H1 (cell line): ENCODE measurements at regions of chr1 and their contacts with region 1.

Region 1: DNA sequence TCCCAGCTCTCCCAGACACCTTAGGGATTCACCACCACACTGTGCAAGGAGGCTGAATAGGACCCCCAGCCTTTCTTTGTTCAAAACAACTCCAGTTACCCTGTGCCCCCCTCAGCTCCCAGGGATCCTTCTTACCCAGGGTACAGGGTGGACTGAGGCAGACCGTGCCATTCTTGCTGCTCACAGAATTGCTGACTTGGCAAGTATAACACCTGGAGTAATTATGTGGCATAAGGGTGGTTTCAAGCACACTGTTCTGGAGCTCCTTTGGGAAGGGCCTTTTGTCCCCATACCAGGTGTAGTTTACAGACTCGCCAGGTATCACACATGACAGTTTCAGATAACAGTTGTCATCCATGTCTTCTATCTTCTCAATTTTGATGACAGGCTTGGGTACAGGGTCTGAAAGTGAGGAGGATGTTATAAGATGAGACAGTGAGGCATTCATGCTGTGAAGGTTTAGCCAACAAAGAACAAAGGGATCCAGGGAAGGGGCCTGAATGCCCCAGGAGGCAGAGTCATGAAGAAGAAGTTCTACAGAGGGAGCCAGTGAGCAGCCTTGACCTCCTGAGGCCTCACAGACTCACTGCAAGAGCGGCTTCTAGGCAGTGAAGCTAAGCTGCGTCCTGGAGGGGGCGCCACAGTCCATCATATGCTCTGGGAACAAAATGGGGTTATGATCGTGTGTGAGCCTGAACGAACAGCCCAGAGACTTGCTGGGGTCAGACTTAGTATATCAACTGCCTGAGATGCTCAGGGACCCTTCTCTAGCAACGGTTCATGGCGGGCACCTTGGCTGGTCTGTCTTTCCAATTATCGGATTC is 30.3 kb downstream of the CD48 start:
- DNase-seq: peak; percentile 90 to 92
- H3K4me3 ChIP-seq: no peak overlapping the region
- H3K27ac ChIP-seq: no peak overlapping the region
- H3K4me1 ChIP-seq: peaks cover 0 to 4% (median 0%) of the 10 kb centered on the region in 4 experiments; a peak in 1 of 7 replicates
- H3K27me3 ChIP-seq: no peaks in the 10 kb centered on the region
- CTCF ChIP-seq: peak; percentile 98 to 100 (median 99)
- EP300 ChIP-seq: no peak
- POLR2A ChIP-seq: no peak
- RAD21 ChIP-seq: peak; percentile 98 to 99

Region 2: DNA sequence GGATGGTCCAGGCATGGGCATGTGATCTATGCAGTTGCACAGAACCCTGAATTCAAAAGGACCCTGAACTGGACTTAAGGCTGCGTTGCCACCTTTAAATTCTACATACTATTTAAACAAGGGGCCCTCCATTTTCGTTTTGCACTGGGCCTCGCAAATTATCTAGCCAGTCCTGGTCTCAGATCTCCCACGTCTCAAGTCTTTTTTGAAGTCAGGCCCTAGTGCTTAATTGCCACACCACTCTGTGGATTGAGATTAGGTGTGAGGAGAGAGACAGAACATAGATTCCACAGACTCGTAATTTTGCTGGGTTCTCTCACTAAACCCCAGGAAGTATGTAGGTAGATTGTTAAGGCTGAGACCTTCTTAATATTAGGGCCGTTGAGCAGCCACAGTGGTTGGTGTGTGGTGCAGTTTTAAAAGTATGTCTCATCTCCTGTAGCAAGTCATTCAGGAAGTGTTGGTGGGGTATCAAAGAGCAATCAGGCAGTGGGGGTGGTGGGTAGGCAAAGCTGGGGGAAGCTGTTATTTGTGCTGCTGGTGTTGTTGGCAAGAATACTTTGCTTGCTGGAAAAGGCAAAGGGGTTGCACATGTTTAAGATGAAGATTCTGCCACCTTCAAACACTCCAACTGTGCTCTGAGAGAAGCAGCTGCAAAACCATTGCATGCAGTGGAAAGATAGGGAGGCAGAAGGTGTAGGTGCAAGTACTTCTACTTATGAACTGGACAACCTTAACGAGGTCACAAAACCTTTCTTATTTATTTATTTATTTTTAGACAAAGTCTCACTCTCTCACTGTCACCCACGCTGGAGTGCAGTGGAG is 113.2 kb before region 1 on chr1:
- CTCF ChIA-PET with region 1: no interaction called
- POLR2A ChIA-PET with region 1: no interaction called
- DNase-seq: no peak
- H3K4me3 ChIP-seq: no peak overlapping the region
- H3K27ac ChIP-seq: no peak overlapping the region
- H3K4me1 ChIP-seq: no peaks in the 10 kb centered on the region
- H3K27me3 ChIP-seq: no peaks in the 10 kb centered on the region
- CTCF ChIP-seq: no peak
- EP300 ChIP-seq: no peak
- POLR2A ChIP-seq: no peak
- RAD21 ChIP-seq: no peak

Region 3: DNA sequence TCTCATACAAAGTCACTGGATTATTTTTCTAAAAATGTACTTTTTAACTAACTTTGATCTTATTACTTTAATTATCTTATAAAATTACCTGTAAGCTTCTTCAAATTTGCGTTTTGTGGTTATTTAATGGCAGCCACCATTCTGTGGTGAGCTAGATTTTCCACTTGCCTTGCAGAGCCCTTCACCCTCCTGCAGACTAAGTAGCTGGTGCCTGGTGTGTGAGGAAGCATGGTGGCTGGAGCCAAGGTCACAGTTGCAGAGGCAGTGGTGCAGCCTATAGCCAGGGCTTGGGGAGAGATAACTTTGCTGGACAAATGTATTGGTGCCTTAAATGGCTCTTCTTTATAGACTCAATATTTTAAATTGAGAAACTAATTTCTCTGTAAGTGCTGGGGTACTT is 90.8 kb before region 1 on chr1:
- CTCF ChIA-PET with region 1: no interaction called
- POLR2A ChIA-PET with region 1: no interaction called
- DNase-seq: no peak
- H3K4me3 ChIP-seq: no peak overlapping the region
- H3K27ac ChIP-seq: no peak overlapping the region
- H3K4me1 ChIP-seq: no peaks in the 10 kb centered on the region
- H3K27me3 ChIP-seq: no peaks in the 10 kb centered on the region
- CTCF ChIP-seq: no peak
- EP300 ChIP-seq: no peak
- POLR2A ChIP-seq: no peak
- RAD21 ChIP-seq: no peak

Region 4: DNA sequence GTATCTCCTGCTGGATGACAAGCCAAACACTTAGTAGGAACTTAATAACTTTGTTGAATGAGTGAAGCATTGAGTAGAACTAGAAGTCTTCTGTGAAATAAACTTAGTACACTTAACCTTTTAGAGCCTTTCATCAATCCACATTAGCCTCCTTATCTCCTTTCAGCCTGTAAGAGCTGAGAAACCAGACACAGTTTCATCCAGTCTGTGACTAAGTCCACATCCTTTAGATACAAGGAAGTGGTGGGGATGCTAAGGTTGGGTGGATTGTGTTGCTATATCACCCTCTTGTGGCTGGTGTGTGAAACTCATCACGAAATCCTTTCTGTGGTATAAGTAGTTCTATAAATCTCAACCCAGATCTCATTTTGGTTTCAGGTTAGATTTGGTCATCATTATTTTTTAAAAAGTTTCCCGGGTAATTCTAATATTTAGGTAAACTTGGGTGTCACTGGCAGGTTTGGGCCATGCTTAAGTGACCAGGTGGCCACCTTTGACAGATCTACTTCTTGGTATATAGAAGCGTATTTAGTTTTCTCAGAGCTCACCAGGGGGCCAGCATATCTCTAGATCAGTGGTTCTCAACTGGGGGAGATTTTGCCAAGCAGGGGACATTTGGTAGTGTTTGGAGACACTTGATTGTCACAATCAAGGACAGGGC is 74.1 kb before region 1 on chr1:
- CTCF ChIA-PET with region 1: interaction called, 11 read pairs
- POLR2A ChIA-PET with region 1: no interaction called
- DNase-seq: no peak
- H3K4me3 ChIP-seq: no peak overlapping the region
- H3K27ac ChIP-seq: no peak overlapping the region
- H3K4me1 ChIP-seq: peaks cover 0 to 2% (median 0%) of the 10 kb centered on the region in 4 experiments; a peak in 1 of 7 replicates
- H3K27me3 ChIP-seq: no peaks in the 10 kb centered on the region
- CTCF ChIP-seq: peak in 2 of 3 experiments; percentile 84 to 86; a peak in 3 of 4 replicates
- EP300 ChIP-seq: no peak
- POLR2A ChIP-seq: no peak
- RAD21 ChIP-seq: peak; percentile 94

Region 5: DNA sequence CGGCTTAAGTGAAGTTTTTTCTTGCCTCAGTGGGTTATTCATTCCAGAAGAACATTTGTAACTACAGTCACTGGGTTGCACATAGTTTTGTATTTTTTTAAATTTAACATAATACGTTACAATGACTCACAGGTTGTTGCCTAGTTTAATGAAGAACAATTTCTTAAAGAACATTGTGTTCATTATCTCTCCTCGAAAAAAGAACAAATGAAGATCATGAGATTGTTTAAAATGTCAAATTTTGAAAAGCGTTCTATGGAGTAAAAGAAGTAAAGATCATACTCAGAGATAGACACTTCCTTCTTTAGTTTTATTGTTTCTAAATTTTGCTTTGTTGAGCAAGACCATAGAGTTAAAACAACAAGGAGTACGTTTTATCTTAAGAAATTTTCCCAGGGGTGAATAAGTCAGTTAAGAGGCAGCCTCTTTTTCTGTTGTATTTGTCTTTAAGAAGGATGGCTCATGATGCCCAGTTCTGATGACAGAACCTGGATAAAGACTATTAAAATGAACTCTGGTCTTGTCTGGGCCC is 24.0 kb before region 1 on chr1:
- CTCF ChIA-PET with region 1: interaction called, 32 read pairs
- POLR2A ChIA-PET with region 1: no interaction called
- DNase-seq: no peak
- H3K4me3 ChIP-seq: no peak overlapping the region
- H3K27ac ChIP-seq: no peak overlapping the region
- H3K4me1 ChIP-seq: peaks cover 0 to 11% (median 6%) of the 10 kb centered on the region in 4 experiments; a peak in 2 of 7 replicates
- H3K27me3 ChIP-seq: no peaks in the 10 kb centered on the region; a peak in 1 of 7 replicates
- CTCF ChIP-seq: no peak
- EP300 ChIP-seq: no peak
- POLR2A ChIP-seq: no peak
- RAD21 ChIP-seq: no peak

Region 6: GRCh38 chr1:160711602-160712311 is 30.5 kb after region 1 on chr1 and contains the start of gene CD48:
- CTCF ChIA-PET with region 1: interaction called, 18 read pairs
- POLR2A ChIA-PET with region 1: no interaction called
- DNase-seq: no peak
- H3K4me3 ChIP-seq: no peak within 1 kb of the TSS
- H3K27ac ChIP-seq: no peak within 1 kb of the TSS
- H3K4me1 ChIP-seq: no peaks in the 10 kb centered on the region
- H3K27me3 ChIP-seq: no peaks in the 10 kb centered on the region
- CTCF ChIP-seq: no peak
- EP300 ChIP-seq: no peak
- POLR2A ChIP-seq: no peak
- RAD21 ChIP-seq: no peak
- total RNA-seq, gene CD48: not detected in 2 replicates

Region 7: DNA sequence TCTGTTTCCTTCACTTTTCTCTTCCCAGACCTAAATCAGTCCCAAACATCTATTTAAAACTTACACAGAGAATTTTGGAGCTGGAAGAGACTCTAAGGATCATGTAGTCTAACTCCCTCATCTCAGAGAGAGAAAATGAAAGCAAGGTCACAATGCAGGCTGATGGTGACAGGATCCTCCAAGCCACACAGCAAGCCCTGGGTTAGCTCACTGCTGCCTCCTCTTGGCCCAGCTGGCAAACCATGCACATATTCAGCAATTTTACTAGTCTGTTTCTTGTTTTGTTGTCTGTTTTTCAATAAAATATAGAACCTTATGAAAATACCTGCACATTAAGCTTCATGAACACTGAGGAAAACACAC is 87.0 kb after region 1 on chr1:
- CTCF ChIA-PET with region 1: interaction called, 42 read pairs
- POLR2A ChIA-PET with region 1: no interaction called
- DNase-seq: peak in 1 of 2 experiments; percentile 60
- H3K4me3 ChIP-seq: no peak overlapping the region
- H3K27ac ChIP-seq: no peak overlapping the region
- H3K4me1 ChIP-seq: no peaks in the 10 kb centered on the region
- H3K27me3 ChIP-seq: no peaks in the 10 kb centered on the region
- CTCF ChIP-seq: peak; percentile 82 to 89 (median 85)
- EP300 ChIP-seq: no peak
- POLR2A ChIP-seq: no peak
- RAD21 ChIP-seq: peak; percentile 78 to 81

Region 8: GRCh38 chr1:160830321-160831153 is 149.3 kb after region 1 on chr1:
- CTCF ChIA-PET with region 1: interaction called, 51 read pairs
- POLR2A ChIA-PET with region 1: no interaction called
- DNase-seq: peak in 1 of 2 experiments; percentile 91
- H3K4me3 ChIP-seq: no peak overlapping the region
- H3K27ac ChIP-seq: no peak overlapping the region
- H3K4me1 ChIP-seq: no peaks in the 10 kb centered on the region
- H3K27me3 ChIP-seq: no peaks in the 10 kb centered on the region
- CTCF ChIP-seq: peak; percentile 82 to 93 (median 89)
- EP300 ChIP-seq: no peak
- POLR2A ChIP-seq: no peak
- RAD21 ChIP-seq: peak; percentile 75 to 80

Region 9: GRCh38 chr1:160963521-160963920 is 282.2 kb after region 1 on chr1:
- CTCF ChIA-PET with region 1: no interaction called
- POLR2A ChIA-PET with region 1: no interaction called
- DNase-seq: no peak
- H3K4me3 ChIP-seq: no peak overlapping the region
- H3K27ac ChIP-seq: no peak overlapping the region
- H3K4me1 ChIP-seq: no peaks in the 10 kb centered on the region
- H3K27me3 ChIP-seq: no peaks in the 10 kb centered on the region
- CTCF ChIP-seq: no peak
- EP300 ChIP-seq: no peak
- POLR2A ChIP-seq: no peak
- RAD21 ChIP-seq: no peak